ENCODE measurements at regions of chr18 and their contacts with region 1.

Region 1: GRCh38 chr18:51051105-51051712 is 21.2 kb downstream of the SMAD4 start:
- DNase-seq: peak; percentile 27
- H3K4me3 ChIP-seq: no peak overlapping the region
- H3K27ac ChIP-seq: no peak overlapping the region
- H3K4me1 ChIP-seq: no peaks in the 10 kb centered on the region
- H3K27me3 ChIP-seq: no peaks in the 10 kb centered on the region
- CTCF ChIP-seq: peak; percentile 79 to 83

Region 2: GRCh38 chr18:50982802-50983179 is 68.4 kb before region 1 on chr18:
- CTCF ChIA-PET with region 1: no interaction called
- dilution Hi-C with region 1: no loop called
- in situ Hi-C with region 1: no loop called
- intact Hi-C with region 1: loop called (anchors 1 kb)
- DNase-seq: no peak
- H3K4me3 ChIP-seq: no peak overlapping the region
- H3K27ac ChIP-seq: no peak overlapping the region
- H3K4me1 ChIP-seq: peaks cover 8% of the 10 kb centered on the region
- H3K27me3 ChIP-seq: no peaks in the 10 kb centered on the region
- CTCF ChIP-seq: peak; percentile 6 to 16

Region 3: DNA sequence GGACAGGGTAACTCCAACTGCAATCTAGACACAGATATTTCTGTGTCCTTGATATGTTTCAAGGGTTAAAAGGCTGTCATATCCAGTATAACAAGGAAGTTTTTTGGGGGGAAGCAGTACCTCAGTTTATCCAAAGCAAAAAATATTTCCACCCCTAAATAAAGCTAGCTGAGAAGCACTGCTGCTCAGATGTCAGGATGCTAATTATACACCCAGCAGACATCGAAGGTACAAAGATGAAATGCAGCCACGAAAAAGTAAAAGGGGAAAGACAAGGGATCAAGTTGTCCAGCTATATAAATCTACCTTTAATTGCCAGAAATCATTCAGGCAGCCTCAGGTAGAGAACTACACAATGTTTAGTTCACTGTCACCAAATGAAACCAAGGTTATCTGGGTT is 57.2 kb before region 1 on chr18:
- CTCF ChIA-PET with region 1: no interaction called
- dilution Hi-C with region 1: no loop called
- in situ Hi-C with region 1: no loop called
- intact Hi-C with region 1: no loop called
- DNase-seq: no peak
- H3K4me3 ChIP-seq: no peak overlapping the region
- H3K27ac ChIP-seq: no peak overlapping the region
- H3K4me1 ChIP-seq: no peaks in the 10 kb centered on the region
- H3K27me3 ChIP-seq: no peaks in the 10 kb centered on the region
- CTCF ChIP-seq: no peak

Region 4: DNA sequence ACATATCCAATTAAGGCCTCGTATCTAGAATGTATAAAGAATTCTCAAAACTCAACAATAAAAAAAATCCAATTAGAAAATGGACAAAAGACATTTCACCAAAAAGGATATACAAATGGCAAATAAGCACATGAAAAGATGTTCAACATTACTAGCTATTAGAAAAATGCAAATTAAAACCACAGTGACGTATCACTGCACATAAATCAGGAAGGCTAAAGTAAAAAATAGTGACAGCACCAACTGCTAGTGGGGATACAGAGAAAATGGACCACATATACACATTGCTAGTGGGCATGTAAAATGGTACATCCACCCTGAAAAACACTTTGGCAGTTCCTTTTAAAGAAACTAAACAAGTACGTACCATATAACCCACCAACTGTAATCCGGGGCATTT is 38.5 kb after region 1 on chr18:
- CTCF ChIA-PET with region 1: no interaction called
- dilution Hi-C with region 1: no loop called
- in situ Hi-C with region 1: no loop called
- intact Hi-C with region 1: no loop called
- DNase-seq: no peak
- H3K4me3 ChIP-seq: no peak overlapping the region
- H3K27ac ChIP-seq: no peak overlapping the region
- H3K4me1 ChIP-seq: no peaks in the 10 kb centered on the region
- H3K27me3 ChIP-seq: no peaks in the 10 kb centered on the region
- CTCF ChIP-seq: no peak

Region 5: DNA sequence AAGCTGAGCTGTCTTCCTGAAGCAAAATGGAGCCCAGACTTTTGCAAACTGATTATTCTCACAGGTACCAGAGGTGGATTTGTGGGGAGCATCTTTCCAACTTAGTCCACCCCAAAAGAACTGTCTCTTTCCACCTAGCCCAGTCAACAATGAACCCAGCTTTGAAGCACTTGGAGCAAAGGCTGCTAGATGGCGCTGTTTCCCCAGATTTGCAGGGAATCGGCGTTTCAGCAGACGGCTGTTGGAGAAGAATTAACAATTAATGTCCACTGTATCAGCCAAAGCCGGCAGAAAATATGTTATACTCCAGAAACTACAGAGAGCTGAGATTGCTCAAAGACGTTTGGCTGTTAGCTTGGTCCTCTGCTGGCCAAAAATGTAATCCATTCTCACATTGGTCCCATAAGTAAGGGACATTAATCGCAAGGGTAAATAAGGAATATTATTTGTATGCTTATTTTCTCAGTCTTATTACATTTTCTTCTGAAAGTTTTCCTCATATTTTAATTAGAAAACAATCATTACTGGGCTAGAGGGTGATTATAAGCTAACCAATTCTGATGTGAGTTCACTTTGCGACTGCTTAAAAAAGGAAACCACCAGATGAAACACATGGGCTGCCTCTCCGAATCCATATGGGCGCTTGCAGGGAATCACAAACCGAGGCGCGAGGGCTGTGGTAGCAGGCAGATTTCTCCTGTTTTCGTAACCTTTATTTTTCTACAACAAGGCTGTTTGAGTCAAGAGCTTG is 570.1 kb after region 1 on chr18:
- CTCF ChIA-PET with region 1: no interaction called
- dilution Hi-C with region 1: no loop called
- in situ Hi-C with region 1: no loop called
- intact Hi-C with region 1: no loop called
- DNase-seq: peak; percentile 48
- H3K4me3 ChIP-seq: no peak overlapping the region
- H3K27ac ChIP-seq: no peak overlapping the region
- H3K4me1 ChIP-seq: peaks cover 21% of the 10 kb centered on the region
- H3K27me3 ChIP-seq: no peaks in the 10 kb centered on the region
- CTCF ChIP-seq: peak; percentile 95 to 97

Measured in mammary epithelial cell (primary cell).